ENCODE measurements at regions of chr11 and their contacts with region 1.

Region 1: DNA sequence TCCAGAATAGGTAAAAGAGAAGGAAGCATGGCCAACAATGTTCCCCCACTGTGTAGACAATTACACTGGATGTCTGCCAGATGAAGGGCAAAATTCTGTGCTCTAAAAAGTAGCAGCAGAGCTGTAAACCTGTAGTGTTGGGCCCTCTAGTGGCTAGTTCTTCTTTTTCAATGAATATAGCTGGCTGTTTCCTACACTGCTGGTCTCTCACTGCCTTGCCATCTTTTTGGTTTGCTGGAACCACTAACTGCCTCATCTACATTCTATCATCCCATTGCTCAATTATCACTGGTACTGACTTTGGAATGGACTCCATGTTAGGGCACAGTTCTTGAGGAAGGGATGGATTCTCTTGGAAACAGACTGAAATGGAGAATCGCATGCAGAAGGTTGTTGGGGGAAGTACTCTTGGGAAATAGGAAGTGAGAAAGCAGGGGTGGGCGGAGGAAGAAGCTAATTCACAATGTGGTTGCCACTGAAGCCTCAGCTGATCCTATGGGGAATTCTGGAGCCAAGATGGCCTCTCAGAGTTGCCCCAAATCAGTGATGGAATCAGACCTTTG is 17.9 kb downstream of the KCNE3 start:
- DNase-seq: peak; percentile 86
- H3K4me3 ChIP-seq: peak overlapping the region in 1 of 3 experiments; percentile 40
- H3K27ac ChIP-seq: no peak overlapping the region
- H3K4me1 ChIP-seq: peaks cover 11% of the 10 kb centered on the region
- H3K27me3 ChIP-seq: no peaks in the 10 kb centered on the region
- CTCF ChIP-seq: peak; percentile 65 to 71
- POLR2A ChIP-seq: no peak

Region 2: DNA sequence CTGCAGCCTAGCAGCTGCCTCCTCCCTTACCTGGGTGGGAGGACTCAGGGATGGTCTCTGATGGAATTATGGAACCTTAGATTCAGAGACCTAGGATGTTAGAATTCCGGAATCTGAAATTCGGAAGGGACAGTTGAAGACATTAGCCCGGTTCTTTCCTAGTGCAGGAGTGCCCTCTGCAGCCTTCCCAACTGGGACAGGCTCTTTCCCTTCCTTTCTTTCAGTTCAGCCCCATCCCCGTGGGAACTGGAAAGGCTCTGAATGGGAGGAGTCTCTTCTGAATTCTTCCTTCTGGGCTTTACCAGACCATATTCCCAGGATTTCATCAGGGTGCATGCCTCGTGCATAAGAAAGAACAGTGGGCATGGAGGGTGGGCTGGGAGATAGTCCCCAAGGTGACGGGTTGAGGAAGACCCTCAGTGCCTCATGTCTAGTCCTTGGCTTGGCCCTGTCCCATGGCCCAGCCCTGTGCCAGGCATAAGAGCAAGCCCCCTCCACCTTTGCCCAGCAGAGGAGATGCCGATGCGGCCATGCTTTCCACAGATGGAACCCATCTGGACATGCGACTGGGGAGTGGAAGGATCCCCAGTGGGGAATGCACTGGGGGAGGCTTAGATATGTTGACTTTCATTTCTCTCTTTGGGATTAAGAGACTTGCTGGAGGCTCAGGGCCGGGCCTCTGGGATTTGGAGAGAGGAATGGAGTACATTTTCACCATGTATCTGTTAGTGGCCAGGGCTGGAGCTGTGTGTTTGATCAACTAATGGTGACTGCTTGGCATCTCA is 484.2 kb before region 1 on chr11:
- CTCF ChIA-PET with region 1: interaction called, 30 read pairs
- POLR2A ChIA-PET with region 1: no interaction called
- dilution Hi-C with region 1: no loop called
- intact Hi-C with region 1: loop called (anchors 1 kb)
- DNase-seq: no peak
- H3K4me3 ChIP-seq: no peak overlapping the region
- H3K27ac ChIP-seq: no peak overlapping the region
- H3K4me1 ChIP-seq: no peaks in the 10 kb centered on the region
- H3K27me3 ChIP-seq: peaks cover 0 to 2% of the 10 kb centered on the region in 2 experiments
- CTCF ChIP-seq: no peak
- POLR2A ChIP-seq: no peak

Region 3: GRCh38 chr11:74321487-74322188 is 127.8 kb before region 1 on chr11:
- CTCF ChIA-PET with region 1: interaction called, 28 read pairs
- POLR2A ChIA-PET with region 1: no interaction called
- dilution Hi-C with region 1: no loop called
- intact Hi-C with region 1: loop called (anchors 2 kb)
- DNase-seq: peak; percentile 99
- H3K4me3 ChIP-seq: no peak overlapping the region
- H3K27ac ChIP-seq: peak overlapping the region; percentile 87
- H3K4me1 ChIP-seq: peaks cover 60% of the 10 kb centered on the region
- H3K27me3 ChIP-seq: no peaks in the 10 kb centered on the region
- CTCF ChIP-seq: peak; percentile 65 to 74
- POLR2A ChIP-seq: peak; percentile 16

Region 4: DNA sequence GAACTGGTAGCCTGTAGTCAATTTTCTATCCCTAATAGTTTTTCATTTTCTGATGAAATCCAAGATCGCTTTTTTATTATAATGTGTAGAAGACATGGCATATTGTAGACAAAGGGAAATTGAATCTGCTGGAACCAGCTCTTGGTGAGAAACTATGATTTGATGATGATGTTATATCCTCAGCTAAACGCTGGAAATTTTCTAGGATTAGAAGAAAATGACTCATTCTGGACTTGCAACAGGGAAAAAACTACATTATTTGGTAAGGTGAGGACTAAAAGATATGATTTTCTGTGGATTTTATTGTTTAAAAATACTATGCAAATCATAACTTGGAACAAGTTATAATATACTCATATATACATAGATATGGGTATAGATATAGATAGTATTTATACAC is 37.1 kb before region 1 on chr11:
- CTCF ChIA-PET with region 1: interaction called, 10 read pairs
- POLR2A ChIA-PET with region 1: no interaction called
- dilution Hi-C with region 1: no loop called
- intact Hi-C with region 1: no loop called
- DNase-seq: no peak
- H3K4me3 ChIP-seq: no peak overlapping the region
- H3K27ac ChIP-seq: no peak overlapping the region
- H3K4me1 ChIP-seq: peaks cover 5% of the 10 kb centered on the region
- H3K27me3 ChIP-seq: no peaks in the 10 kb centered on the region
- CTCF ChIP-seq: no peak
- POLR2A ChIP-seq: no peak

Region 5: DNA sequence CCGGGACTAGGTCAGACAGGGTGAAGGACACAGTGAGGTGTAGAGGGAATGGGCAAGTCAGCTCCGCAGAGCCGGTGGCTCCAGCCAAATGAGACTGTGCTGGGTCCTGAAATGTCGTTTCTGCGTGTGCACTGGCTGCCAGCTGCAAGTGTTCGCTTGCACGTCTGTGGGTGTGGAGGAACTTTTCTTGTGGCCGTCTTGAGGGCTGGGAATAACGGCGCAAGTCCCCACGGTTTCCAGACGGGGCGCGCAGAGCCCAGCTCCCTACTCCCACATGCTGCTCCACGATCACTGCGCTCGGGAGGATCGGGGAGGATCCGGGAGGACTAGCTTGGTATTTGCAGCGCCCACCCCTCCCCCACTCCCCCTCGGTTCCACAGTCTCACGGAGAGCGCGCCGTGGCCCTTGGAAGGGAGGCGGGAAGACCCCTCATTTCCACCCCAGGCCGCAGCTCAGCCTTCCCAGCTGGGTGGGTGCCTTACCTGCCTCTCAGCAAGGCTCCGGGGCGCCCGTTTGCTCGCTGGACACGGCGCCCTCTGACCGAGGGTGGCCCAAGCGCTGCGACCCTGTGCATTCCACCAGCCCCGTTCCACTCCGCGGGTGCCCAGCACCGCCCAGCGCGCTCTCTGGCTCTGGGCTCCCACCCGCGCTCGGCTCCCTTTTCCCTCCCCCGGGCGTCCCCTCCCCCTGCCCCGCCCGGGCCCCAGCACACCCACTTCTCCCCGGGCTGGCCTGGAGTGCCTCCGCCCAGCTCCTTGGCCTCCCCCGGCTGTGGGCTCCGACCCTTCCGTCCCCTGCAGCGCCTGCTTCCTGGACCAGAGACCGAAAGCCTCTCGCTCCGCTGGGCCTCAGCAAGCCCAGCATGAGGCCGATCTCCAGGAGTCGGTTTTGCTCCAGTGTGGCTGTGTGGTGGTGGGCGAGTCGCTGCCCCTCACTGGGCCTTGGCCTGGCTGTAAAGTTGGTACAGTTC is 17.8 kb after region 1 on chr11 and contains the start of gene KCNE3:
- CTCF ChIA-PET with region 1: interaction called, 38 read pairs
- POLR2A ChIA-PET with region 1: no interaction called
- dilution Hi-C with region 1: no loop called
- intact Hi-C with region 1: no loop called
- DNase-seq: peak; percentile 13
- H3K4me3 ChIP-seq: peak within 1 kb of the TSS; percentile 31 to 76 (median 40)
- H3K27ac ChIP-seq: no peak within 1 kb of the TSS
- H3K4me1 ChIP-seq: peaks cover 6% of the 10 kb centered on the region
- H3K27me3 ChIP-seq: peaks cover 16 to 27% of the 10 kb centered on the region in 2 experiments
- CTCF ChIP-seq: no peak
- POLR2A ChIP-seq: no peak
- total RNA-seq, gene KCNE3: 1.3 and 2.2 TPM in 2 replicates

Region 6: GRCh38 chr11:74543991-74544390 is 94.5 kb after region 1 on chr11:
- CTCF ChIA-PET with region 1: no interaction called
- POLR2A ChIA-PET with region 1: no interaction called
- dilution Hi-C with region 1: no loop called
- intact Hi-C with region 1: no loop called
- DNase-seq: no peak
- H3K4me3 ChIP-seq: no peak overlapping the region
- H3K27ac ChIP-seq: no peak overlapping the region
- H3K4me1 ChIP-seq: no peaks in the 10 kb centered on the region
- H3K27me3 ChIP-seq: peaks cover 11% of the 10 kb centered on the region in 2 experiments
- CTCF ChIP-seq: no peak
- POLR2A ChIP-seq: no peak

Region 7: DNA sequence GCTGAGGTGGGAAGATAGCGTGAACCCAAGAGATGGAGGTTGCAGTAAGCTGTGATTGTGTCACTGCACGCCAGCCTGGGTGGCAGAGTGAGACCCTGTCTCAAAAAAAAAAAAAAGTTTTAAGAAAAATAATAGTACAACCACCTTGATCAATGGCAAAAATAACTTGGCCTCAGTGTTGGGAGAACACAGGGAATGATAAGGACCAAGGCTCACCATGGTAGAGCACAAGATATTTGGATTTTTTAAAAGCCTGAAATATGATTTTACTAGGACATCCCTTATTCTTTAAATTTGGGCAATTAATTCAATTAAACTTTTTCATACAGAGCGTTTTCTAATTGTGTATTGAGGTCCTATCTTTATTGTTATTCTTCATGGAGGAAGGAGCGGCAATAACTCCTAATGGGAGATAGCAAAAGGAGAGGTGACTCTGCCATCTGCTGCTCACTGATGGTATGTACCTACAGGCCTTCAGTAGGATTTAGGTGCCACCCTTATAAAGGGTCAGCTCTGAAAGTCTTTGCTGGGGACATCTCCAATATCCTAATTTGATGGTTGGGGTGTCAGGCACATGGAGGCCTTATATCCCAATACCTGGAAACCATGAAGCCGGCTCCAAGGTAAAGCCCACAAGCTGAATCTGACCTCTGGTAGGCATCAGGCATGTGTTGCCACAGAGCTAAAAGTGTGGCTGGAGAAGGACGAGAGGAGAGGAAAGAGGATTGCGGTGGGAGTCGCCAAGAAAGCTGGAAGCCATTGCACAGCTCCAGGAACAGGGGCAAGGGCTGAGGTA is 121.0 kb after region 1 on chr11:
- CTCF ChIA-PET with region 1: interaction called, 595 read pairs
- POLR2A ChIA-PET with region 1: no interaction called
- dilution Hi-C with region 1: no loop called
- intact Hi-C with region 1: loop called (anchors 1 kb)
- DNase-seq: peak; percentile 71
- H3K4me3 ChIP-seq: no peak overlapping the region
- H3K27ac ChIP-seq: no peak overlapping the region
- H3K4me1 ChIP-seq: no peaks in the 10 kb centered on the region
- H3K27me3 ChIP-seq: peaks cover 4 to 9% of the 10 kb centered on the region in 2 experiments
- CTCF ChIP-seq: peak; percentile 56 to 74
- POLR2A ChIP-seq: no peak

Region 8: DNA sequence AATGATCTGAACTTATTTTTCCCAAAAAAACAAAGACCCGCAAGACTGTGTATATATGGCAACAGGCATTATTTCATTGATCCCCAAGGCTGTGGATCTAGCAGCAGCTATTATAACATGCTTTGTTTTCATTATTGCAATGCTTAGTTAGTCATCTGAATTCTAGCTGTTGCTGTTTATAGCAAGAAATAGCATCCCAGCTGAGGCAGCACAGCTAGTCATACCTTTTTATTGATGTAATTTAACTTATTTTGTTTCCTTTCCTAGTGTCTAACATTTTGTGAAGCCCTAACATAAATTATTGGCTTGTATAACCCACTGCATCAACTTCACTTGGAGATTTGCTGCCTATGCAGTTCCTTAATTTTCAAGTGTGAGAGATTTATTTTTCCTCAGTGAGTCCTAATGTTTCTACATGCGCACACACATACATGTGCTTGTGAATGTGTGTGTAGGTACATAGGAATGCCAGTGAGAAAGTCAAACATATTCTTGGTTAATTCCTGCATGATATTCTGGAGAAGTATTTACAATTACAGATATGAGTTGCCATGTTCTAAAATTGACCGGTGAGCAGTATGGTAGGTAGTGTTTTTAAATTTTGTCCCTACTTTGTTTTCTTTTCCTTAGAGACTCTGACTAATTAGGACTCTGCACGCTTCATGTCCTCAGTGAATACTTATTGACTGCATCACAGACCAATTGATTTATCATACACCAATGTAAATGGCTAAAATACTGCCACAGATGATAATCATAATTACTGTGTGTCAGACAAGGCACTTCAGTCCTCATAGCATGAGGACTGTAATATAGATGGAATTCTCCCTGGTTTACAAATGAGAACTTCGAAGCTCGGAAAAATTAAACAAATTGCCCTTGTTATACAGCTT is 1637.5 kb after region 1 on chr11:
- CTCF ChIA-PET with region 1: no interaction called
- POLR2A ChIA-PET with region 1: no interaction called
- dilution Hi-C with region 1: no loop called
- intact Hi-C with region 1: no loop called
- DNase-seq: no peak
- H3K4me3 ChIP-seq: no peak overlapping the region
- H3K27ac ChIP-seq: no peak overlapping the region
- H3K4me1 ChIP-seq: peaks cover 17% of the 10 kb centered on the region
- H3K27me3 ChIP-seq: no peaks in the 10 kb centered on the region
- CTCF ChIP-seq: no peak
- POLR2A ChIP-seq: no peak

Measured in endothelial cell of umbilical vein (primary cell).